CD4-positive, alpha-beta T cell (primary cell): ENCODE measurements at regions of chr2 and their contacts with region 1.

Region 1: DNA sequence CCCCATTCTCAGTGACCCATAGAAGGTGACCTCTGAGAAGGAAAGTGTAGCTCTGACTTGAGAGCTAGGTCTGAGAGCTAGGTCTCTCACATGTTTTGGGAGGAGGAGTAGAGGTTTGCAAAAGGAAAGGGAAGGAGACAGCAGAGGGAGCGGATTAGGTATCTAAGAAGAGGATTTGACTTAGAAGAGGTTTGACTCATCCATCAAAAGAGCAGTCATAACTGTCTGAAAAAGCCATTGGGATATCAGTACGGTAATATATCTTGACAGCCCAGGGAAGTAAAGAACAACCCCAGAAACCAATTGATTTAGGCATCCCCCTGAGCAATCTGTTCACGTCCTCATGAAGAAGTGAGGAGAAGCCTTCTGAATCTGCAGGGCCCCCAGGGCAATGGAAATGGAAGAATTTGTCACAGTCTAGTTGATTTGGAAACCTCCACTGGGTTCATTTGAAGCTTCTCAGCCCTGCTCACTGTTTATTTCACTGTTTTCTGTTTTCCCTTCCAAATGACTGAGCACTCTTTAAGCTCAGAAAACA is 19.3 kb downstream of the OXER1 start:
- DNase-seq: no peak
- ATAC-seq: no peak
- H3K4me3 ChIP-seq: no peak overlapping the region
- H3K4me3 Mint-ChIP-seq: no peak overlapping the region
- H3K27ac ChIP-seq: no peak overlapping the region
- H3K27ac Mint-ChIP-seq: no peak overlapping the region
- H3K4me1 ChIP-seq: no peaks in the 10 kb centered on the region
- H3K4me1 Mint-ChIP-seq: peaks cover 5% of the 10 kb centered on the region
- H3K27me3 ChIP-seq: no peaks in the 10 kb centered on the region
- H3K27me3 Mint-ChIP-seq: no peaks in the 10 kb centered on the region
- CTCF ChIP-seq: no peak

Region 2: DNA sequence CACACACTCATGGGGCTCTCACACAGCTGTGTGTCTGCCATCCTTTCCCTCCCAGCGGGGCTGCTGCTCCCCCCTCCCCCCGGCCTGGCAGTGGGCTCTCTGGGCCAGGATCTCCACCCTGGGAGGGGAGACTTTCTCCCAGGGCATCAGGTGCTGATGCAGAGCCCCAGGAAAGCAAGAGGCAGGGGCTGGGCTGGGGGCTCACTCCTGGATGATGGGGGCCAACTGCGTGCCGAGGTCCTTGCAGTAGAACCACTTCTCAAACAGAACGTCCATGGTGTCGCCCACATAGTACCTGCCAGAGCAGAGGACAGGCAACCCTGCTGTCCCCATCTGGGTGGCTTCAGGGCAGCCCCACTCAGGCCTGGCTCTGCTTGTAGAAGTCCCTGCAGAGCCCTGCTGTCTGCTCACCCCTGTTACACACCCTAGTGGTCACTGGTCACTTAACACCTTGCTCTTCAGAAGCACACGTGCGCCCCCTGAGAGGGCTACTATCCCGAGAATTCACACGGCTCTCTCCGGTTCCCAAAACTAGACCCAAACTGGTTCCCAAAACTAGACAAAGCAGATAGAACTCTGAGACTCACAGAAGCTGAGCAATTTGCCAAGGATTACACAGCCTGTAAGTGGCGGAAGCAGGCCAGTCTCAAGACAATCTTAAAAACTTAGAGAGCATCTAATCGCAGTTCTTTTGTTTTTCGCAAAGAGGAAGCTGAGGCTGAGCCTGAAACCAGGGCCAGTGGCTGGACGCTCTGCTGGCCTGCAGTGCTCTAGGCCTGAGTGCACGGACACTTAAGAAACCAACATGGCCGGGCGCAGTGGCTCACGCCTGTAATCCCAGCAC is 25.9 kb after region 1 on chr2:
- CTCF ChIA-PET with region 1: no interaction called
- POLR2A ChIA-PET with region 1: no interaction called
- intact Hi-C with region 1: no loop called
- DNase-seq: peak in 2 of 14 experiments; percentile 36 to 41
- ATAC-seq: no peak
- H3K4me3 ChIP-seq: no peak overlapping the region
- H3K4me3 Mint-ChIP-seq: no peak overlapping the region
- H3K27ac ChIP-seq: no peak overlapping the region
- H3K27ac Mint-ChIP-seq: no peak overlapping the region
- H3K4me1 ChIP-seq: no peaks in the 10 kb centered on the region
- H3K4me1 Mint-ChIP-seq: peaks cover 6% of the 10 kb centered on the region
- H3K27me3 ChIP-seq: no peaks in the 10 kb centered on the region
- H3K27me3 Mint-ChIP-seq: no peaks in the 10 kb centered on the region
- CTCF ChIP-seq: no peak

Region 3: DNA sequence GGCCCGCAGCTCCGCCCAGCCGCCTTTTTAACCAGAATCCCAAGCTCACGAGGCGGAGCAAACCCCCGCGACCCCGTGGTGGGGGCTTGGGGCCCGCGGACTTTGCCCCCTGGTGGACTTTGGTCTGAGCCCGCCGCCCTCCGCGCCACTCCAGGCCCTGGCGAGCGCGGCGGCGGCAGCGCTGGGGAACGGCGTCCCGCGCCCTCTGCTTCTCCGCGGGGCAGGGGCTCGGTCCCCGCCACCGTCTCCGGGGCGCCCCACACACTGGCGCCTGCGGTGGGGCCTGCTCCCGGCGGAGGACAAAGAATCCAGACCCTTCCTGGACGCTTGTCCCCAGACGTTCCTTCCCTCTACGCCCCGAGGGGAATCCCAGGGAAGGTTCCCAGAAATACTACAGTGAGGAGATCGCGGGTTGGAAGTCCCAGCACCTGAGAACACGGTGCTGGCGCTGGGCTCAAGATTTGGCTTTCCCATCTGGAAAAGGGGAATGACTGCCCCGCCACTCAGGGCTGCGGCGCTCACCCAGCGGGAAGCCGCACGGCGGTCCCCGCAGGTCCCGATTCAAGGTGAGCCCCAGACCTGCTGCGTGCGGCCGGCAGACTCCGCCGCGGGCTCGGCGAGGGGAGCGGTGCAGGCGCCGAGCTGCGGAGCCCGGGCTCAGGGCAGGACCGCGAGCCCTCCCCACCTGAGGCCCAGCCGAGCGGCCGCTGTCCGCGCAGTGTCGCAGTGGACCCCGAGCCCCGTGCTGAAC is 48.1 kb after region 1 on chr2 and contains the start of gene HAAO:
- CTCF ChIA-PET with region 1: no interaction called
- POLR2A ChIA-PET with region 1: no interaction called
- intact Hi-C with region 1: loop called in 1 of 2 experiments (anchors 5 kb)
- DNase-seq: peak in 3 of 14 experiments; percentile 19 to 31 (median 31)
- ATAC-seq: peak; percentile 60
- H3K4me3 ChIP-seq: peak within 1 kb of the TSS; percentile 47
- H3K4me3 Mint-ChIP-seq: peak within 1 kb of the TSS; percentile 89
- H3K27ac ChIP-seq: no peak within 1 kb of the TSS
- H3K27ac Mint-ChIP-seq: no peak within 1 kb of the TSS
- H3K4me1 ChIP-seq: peaks cover 22% of the 10 kb centered on the region
- H3K4me1 Mint-ChIP-seq: peaks cover 30% of the 10 kb centered on the region
- H3K27me3 ChIP-seq: peaks cover 20 to 28% of the 10 kb centered on the region in 2 experiments
- H3K27me3 Mint-ChIP-seq: peaks cover 48% of the 10 kb centered on the region
- CTCF ChIP-seq: no peak
- total RNA-seq, gene HAAO: not detected